Right ventricle myocardium inferior (tissue), 1 donor: ENCODE measurements at regions of chr7 and their contacts with region 1.

Region 1: GRCh38 chr7:72493850-72494661 is 81.9 kb upstream of the CALN1 start:
- DNase-seq: peak; percentile 69
- ATAC-seq: no peak

Region 2: GRCh38 chr7:71752171-71752935 is 741.7 kb before region 1 on chr7:
- intact Hi-C with region 1: loop called (anchors 5 kb)
- DNase-seq: peak; percentile 18
- ATAC-seq: peak; percentile 59

Region 3: GRCh38 chr7:72183684-72184234 is 310.3 kb before region 1 on chr7:
- intact Hi-C with region 1: loop called (anchors 10 kb)
- DNase-seq: no peak
- ATAC-seq: no peak

Region 4: GRCh38 chr7:72709909-72710308 is 215.9 kb after region 1 on chr7:
- intact Hi-C with region 1: no loop called
- DNase-seq: no peak
- ATAC-seq: no peak